ENCODE measurements at regions of chr1 and their contacts with region 1.

Region 1: DNA sequence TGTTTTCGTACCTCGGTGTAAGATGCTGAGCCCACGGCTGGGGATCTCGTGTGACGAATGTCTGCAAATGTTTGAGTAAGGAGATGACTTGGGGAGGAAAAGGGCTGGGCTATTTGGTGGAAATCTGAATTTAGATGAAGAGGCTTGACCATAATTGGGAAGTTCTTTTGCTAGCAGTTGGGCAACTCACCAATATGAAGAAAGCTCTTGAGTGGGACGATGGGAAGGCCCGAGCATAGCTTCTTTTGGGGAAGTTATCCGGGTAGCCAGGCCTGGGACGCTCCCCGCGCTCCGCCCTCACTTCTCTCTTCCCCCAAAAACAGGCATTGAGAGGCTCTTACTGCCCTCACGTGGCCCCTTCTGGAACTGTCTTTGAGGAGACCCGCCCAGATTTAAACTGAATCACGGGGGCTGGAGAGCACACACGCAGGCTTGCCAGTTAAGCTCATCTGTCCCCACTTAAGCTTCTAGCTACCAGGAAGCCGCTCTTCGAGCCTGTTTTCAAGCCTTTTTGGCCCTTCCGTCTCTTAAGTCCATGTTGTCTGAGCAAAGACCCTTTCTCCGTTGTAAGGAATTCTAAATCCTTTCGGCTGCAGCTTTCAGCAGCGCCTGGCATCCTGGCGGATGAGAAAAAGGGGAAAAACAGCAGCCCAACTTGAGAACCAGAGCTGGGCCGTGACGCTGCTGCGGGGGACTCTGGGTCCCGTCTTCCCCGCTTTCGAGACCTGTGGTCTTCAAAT is 93.1 kb downstream of the NID1 start:
- DNase-seq: peak; percentile 90
- ATAC-seq: peak; percentile 96
- H3K4me3 ChIP-seq: peak overlapping the region; percentile 33 to 54
- H3K27ac ChIP-seq: peak overlapping the region; percentile 98
- H3K4me1 ChIP-seq: peaks cover 20% of the 10 kb centered on the region
- H3K27me3 ChIP-seq: no peaks in the 10 kb centered on the region
- CTCF ChIP-seq: peak; percentile 90

Region 2: GRCh38 chr1:235513495-235514366 is 458.0 kb before region 1 on chr1:
- CTCF ChIA-PET with region 1: interaction called, 3 read pairs
- POLR2A ChIA-PET with region 1: no interaction called
- in situ Hi-C with region 1: no loop called
- intact Hi-C with region 1: loop called (anchors 5 kb)
- DNase-seq: no peak
- ATAC-seq: peak; percentile 74
- H3K4me3 ChIP-seq: no peak overlapping the region
- H3K27ac ChIP-seq: no peak overlapping the region
- H3K4me1 ChIP-seq: no peaks in the 10 kb centered on the region
- H3K27me3 ChIP-seq: no peaks in the 10 kb centered on the region
- CTCF ChIP-seq: peak; percentile 89

Region 3: GRCh38 chr1:235843461-235843961 is 128.2 kb before region 1 on chr1:
- CTCF ChIA-PET with region 1: interaction called, 14 read pairs
- POLR2A ChIA-PET with region 1: no interaction called
- in situ Hi-C with region 1: no loop called
- intact Hi-C with region 1: no loop called
- DNase-seq: no peak
- ATAC-seq: peak; percentile 72
- H3K4me3 ChIP-seq: no peak overlapping the region
- H3K27ac ChIP-seq: peak overlapping the region; percentile 46; the same call in 1 of the 2 replicates
- H3K4me1 ChIP-seq: peaks cover 39% of the 10 kb centered on the region
- H3K27me3 ChIP-seq: no peaks in the 10 kb centered on the region
- CTCF ChIP-seq: peak; percentile 77

Region 4: DNA sequence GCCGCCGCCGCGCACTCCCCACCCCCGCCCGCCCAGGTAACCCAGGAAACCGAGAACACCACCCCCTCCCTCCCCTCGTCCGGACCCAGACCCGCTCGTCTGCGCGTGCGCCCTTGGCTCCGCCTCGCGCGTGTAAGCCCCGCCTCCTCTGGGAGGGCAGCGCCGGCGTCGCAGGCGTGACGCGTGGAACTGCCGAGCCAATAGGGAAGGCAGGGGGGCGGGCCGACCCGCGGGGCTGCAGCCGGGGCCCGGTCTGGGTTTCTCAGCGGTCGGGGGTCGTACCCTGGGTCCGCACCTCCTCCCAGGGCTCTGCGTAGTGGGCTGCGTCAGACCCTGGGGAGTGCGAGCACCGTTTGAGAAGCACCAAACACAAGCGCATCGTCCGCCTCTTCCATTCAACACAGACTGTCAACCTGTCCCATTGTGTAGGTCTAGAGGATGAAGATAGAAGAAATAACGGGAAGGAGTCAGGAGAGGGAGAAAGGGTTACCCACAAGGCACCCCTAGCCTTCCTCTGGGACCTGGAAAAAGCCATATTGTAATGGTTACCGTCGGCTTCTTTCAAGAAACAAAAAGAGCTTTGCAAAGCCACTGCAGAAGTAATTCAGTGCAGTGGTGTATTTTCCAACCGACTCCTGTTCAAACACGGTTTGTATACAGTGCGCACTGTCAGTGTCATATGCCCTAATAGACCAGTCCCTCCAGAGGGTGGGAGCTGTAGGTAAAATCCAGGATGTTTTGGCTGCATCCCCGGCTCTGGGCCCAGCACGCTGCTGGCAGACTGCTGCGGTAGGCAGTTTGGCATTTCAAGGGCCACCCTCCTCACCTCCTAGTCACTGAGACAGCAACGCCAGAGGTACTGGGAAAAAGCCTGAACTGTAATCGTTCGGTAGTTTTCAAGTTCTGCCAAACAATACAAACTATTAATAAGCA is 104.6 kb before region 1 on chr1:
- CTCF ChIA-PET with region 1: interaction called, 16 read pairs
- POLR2A ChIA-PET with region 1: interaction called, 3 read pairs
- in situ Hi-C with region 1: no loop called
- intact Hi-C with region 1: loop called (anchors 5 kb)
- DNase-seq: peak; percentile 75
- ATAC-seq: peak; percentile 89
- H3K4me3 ChIP-seq: peak overlapping the region; percentile 76 to 82
- H3K27ac ChIP-seq: peak overlapping the region; percentile 87
- H3K4me1 ChIP-seq: peaks cover 39% of the 10 kb centered on the region
- H3K27me3 ChIP-seq: no peaks in the 10 kb centered on the region
- CTCF ChIP-seq: no peak

Region 5: GRCh38 chr1:235917267-235917811 is 54.4 kb before region 1 on chr1:
- CTCF ChIA-PET with region 1: interaction called, 17 read pairs
- POLR2A ChIA-PET with region 1: interaction called, 4 read pairs
- in situ Hi-C with region 1: no loop called
- intact Hi-C with region 1: loop called (anchors 2 kb)
- DNase-seq: peak; percentile 99
- ATAC-seq: peak; percentile 90
- H3K4me3 ChIP-seq: peak overlapping the region in 1 of 2 experiments; percentile 0; a peak in 1 of 4 replicates
- H3K27ac ChIP-seq: peak overlapping the region; percentile 99
- H3K4me1 ChIP-seq: peaks cover 81% of the 10 kb centered on the region
- H3K27me3 ChIP-seq: no peaks in the 10 kb centered on the region
- CTCF ChIP-seq: no peak

Region 6: GRCh38 chr1:236010447-236010846 is 38.7 kb after region 1 on chr1:
- CTCF ChIA-PET with region 1: no interaction called
- POLR2A ChIA-PET with region 1: interaction called, 13 read pairs
- in situ Hi-C with region 1: no loop called
- intact Hi-C with region 1: no loop called
- DNase-seq: no peak
- ATAC-seq: no peak
- H3K4me3 ChIP-seq: no peak overlapping the region
- H3K27ac ChIP-seq: no peak overlapping the region
- H3K4me1 ChIP-seq: no peaks in the 10 kb centered on the region
- H3K27me3 ChIP-seq: no peaks in the 10 kb centered on the region
- CTCF ChIP-seq: no peak